ENCODE measurements at regions of chr19 and their contacts with region 1.

Region 1: DNA sequence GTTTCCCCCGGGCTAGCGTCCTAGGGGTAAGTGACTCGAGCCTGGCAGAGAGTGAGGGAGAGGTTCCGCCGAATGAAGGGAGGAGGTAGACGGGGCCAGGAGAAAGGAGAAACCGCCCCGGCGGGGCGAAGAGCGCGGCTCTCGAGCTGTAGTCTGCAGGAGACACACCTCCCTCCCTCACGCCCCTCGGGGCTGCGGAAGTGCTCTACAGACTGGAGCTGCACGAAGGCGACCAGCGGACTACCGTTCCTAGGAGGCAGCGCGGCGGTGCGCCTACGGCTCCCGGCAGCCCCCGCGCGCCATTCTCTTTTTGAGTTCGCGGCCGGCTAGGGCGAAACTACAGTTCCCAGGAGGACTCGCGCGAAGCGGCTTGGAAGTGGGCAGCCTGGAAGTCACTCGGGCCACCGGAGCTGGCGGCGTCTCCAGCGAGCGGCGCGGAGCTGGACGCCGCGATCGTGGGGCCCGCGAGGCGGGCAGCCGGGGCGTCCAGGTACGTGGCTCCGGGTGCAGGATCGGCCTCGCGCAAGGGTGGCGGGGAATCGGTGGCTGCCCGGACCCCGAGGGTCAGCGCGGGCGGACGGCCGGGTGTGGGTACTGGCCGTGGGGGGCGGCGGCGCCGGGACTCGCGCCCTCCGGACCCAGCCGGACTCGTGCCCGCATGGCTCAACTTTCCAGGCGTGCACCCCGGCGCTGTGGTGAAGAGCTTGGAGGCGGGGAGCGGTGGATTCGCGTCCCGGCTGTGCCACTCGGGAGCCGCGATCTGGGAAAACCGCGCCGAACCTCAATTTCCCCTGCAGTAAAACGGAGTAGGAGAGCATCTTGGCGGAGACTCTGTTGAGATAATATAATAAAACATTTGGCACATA is at the start of gene SIPA1L3:
- DNase-seq: peak; percentile 84 to 96 (median 92)
- ATAC-seq: peak; percentile 98
- H3K4me3 ChIP-seq: peak within 1 kb of the TSS; percentile 98
- H3K4me3 Mint-ChIP-seq: peak within 1 kb of the TSS; percentile 97
- H3K27ac ChIP-seq: peak within 1 kb of the TSS; percentile 23 to 68
- H3K27ac Mint-ChIP-seq: peak within 1 kb of the TSS; percentile 91
- H3K4me1 ChIP-seq: peaks cover 26% of the 10 kb centered on the region
- H3K4me1 Mint-ChIP-seq: peaks cover 37% of the 10 kb centered on the region
- H3K27me3 ChIP-seq: no peaks in the 10 kb centered on the region
- H3K27me3 Mint-ChIP-seq: no peaks in the 10 kb centered on the region
- CTCF ChIP-seq: no peak
- total RNA-seq, gene SIPA1L3: 15.5 to 17.7 TPM

Region 2: GRCh38 chr19:36687214-36688056 is 1219.7 kb before region 1 on chr19 and contains the start of gene ZNF567:
- CTCF ChIA-PET with region 1: no interaction called
- POLR2A ChIA-PET with region 1: no interaction called
- intact Hi-C with region 1: loop called in 1 of 2 experiments (anchors 2 kb)
- DNase-seq: peak; percentile 94 to 99 (median 97)
- ATAC-seq: peak; percentile 93
- H3K4me3 ChIP-seq: peak within 1 kb of the TSS; percentile 67
- H3K4me3 Mint-ChIP-seq: peak within 1 kb of the TSS; percentile 99
- H3K27ac ChIP-seq: peak within 1 kb of the TSS; percentile 47 to 56
- H3K27ac Mint-ChIP-seq: peak within 1 kb of the TSS; percentile 97
- H3K4me1 ChIP-seq: peaks cover 23% of the 10 kb centered on the region
- H3K4me1 Mint-ChIP-seq: peaks cover 40% of the 10 kb centered on the region
- H3K27me3 ChIP-seq: no peaks in the 10 kb centered on the region
- H3K27me3 Mint-ChIP-seq: no peaks in the 10 kb centered on the region
- CTCF ChIP-seq: no peak
- total RNA-seq, gene ZNF567: 7.3 to 7.6 TPM

Region 3: DNA sequence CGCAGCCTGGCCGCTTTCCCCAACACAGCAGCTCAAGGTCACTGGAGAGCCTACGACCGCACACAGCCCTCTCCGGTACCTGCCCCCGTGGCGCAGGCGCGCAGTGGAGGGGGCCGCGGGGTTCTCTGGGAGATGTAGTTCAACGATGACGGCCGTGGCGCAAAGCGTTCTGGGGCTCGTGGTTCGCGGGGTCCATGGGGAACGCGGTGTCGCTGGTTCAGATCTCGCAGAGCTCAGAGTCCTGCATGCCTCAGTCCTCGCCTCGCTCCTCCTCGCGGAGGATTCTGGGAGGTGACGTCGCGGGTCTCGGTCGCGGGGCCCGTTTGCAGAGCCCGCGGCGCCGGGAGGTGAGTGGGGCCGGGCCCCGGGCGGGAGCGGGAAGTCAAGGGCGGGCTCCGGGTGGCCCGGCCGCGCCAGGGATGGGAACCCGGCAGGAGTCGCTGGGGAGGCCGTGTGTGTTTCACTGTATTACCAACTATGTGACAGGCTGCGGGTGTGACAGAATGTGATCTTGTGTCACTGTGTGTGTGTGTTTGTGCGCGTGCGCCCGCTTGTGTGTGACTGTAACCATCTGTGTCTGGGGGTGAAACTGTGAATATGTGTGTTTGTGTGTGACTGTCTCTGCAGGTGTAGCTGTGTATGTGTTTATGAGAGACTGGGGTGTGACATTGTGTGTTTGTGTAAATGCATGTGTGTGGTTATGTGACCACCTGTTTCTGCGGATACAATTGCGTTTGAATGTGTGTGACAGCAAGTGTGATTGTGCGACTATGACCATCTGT is 536.0 kb before region 1 on chr19 and contains the start of gene ZNF527:
- CTCF ChIA-PET with region 1: interaction called, 6 read pairs
- POLR2A ChIA-PET with region 1: interaction called, 9 read pairs
- intact Hi-C with region 1: loop called in 1 of 2 experiments (anchors 5 kb)
- DNase-seq: peak; percentile 93 to 98 (median 96)
- ATAC-seq: peak; percentile 96
- H3K4me3 ChIP-seq: peak within 1 kb of the TSS; percentile 59
- H3K4me3 Mint-ChIP-seq: peak within 1 kb of the TSS; percentile 96
- H3K27ac ChIP-seq: peak within 1 kb of the TSS; percentile 76 to 85
- H3K27ac Mint-ChIP-seq: peak within 1 kb of the TSS; percentile 96
- H3K4me1 ChIP-seq: peaks cover 17% of the 10 kb centered on the region
- H3K4me1 Mint-ChIP-seq: peaks cover 16% of the 10 kb centered on the region
- H3K27me3 ChIP-seq: no peaks in the 10 kb centered on the region
- H3K27me3 Mint-ChIP-seq: no peaks in the 10 kb centered on the region
- CTCF ChIP-seq: no peak
- total RNA-seq, gene ZNF527: 7.8 to 8.4 TPM

Region 4: GRCh38 chr19:38049105-38049649 is 142.1 kb after region 1 on chr19:
- CTCF ChIA-PET with region 1: interaction called, 18 read pairs
- POLR2A ChIA-PET with region 1: interaction called, 35 read pairs
- intact Hi-C with region 1: loop called (anchors 2 kb)
- DNase-seq: peak; percentile 27 to 90 (median 44)
- ATAC-seq: peak; percentile 88
- H3K4me3 ChIP-seq: peak overlapping the region; percentile 49
- H3K4me3 Mint-ChIP-seq: peak overlapping the region; percentile 65
- H3K27ac ChIP-seq: peak overlapping the region; percentile 78 to 83
- H3K27ac Mint-ChIP-seq: peak overlapping the region; percentile 98
- H3K4me1 ChIP-seq: peaks cover 42% of the 10 kb centered on the region
- H3K4me1 Mint-ChIP-seq: peaks cover 39% of the 10 kb centered on the region
- H3K27me3 ChIP-seq: no peaks in the 10 kb centered on the region
- H3K27me3 Mint-ChIP-seq: no peaks in the 10 kb centered on the region
- CTCF ChIP-seq: no peak

Region 5: GRCh38 chr19:38229585-38230073 is 322.5 kb after region 1 on chr19:
- CTCF ChIA-PET with region 1: interaction called, 7 read pairs
- POLR2A ChIA-PET with region 1: no interaction called
- intact Hi-C with region 1: loop called in 1 of 2 experiments (anchors 5 kb)
- DNase-seq: peak; percentile 25 to 85 (median 50)
- ATAC-seq: peak; percentile 91
- H3K4me3 ChIP-seq: no peak overlapping the region
- H3K4me3 Mint-ChIP-seq: peak overlapping the region; percentile 13
- H3K27ac ChIP-seq: no peak overlapping the region
- H3K27ac Mint-ChIP-seq: no peak overlapping the region
- H3K4me1 ChIP-seq: peaks cover 24% of the 10 kb centered on the region
- H3K4me1 Mint-ChIP-seq: peaks cover 12% of the 10 kb centered on the region
- H3K27me3 ChIP-seq: peaks cover 53 to 59% of the 10 kb centered on the region in 2 experiments
- H3K27me3 Mint-ChIP-seq: peaks cover 79% of the 10 kb centered on the region
- CTCF ChIP-seq: no peak

Region 6: DNA sequence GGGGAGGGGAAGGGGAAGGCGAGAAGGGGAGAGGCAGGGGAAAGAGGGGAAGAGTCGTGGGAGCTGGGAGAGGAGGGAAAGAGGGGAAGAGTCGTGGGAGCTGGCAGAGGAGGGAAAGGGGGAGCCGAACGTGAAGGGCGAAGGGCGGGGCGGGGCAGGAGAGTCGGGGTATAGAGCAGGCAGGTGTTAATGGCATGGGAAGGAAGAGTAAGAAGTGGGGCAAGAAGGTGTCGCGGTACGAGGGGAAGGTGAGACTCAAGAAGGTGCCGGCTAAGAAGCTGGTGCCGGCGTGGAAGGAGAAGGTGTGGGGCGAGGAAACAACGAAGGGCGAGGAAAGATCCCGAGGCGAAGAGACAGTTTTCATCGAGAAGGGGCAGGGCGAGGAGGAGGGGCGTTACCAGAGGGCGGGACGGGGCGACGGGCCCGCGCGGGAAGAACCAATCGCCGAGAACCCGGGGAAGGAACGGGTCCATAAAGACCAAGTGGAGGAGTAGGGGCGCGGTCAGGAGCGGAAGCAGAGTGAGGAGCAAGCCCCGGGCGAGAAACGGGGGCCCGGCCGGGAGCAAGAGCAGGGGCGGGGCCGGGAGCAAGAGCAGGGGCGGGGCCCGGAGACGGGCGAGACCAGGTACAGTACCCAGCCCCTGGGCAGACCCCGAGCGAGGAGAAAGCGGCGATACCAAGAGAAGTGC is 429.0 kb after region 1 on chr19:
- CTCF ChIA-PET with region 1: interaction called, 8 read pairs
- POLR2A ChIA-PET with region 1: interaction called, 9 read pairs
- intact Hi-C with region 1: loop called (anchors 1 kb)
- DNase-seq: peak; percentile 85 to 97 (median 92)
- ATAC-seq: peak; percentile 63
- H3K4me3 ChIP-seq: peak overlapping the region; percentile 95
- H3K4me3 Mint-ChIP-seq: peak overlapping the region; percentile 93
- H3K27ac ChIP-seq: peak overlapping the region; percentile 84 to 97
- H3K27ac Mint-ChIP-seq: peak overlapping the region; percentile 96
- H3K4me1 ChIP-seq: peaks cover 27% of the 10 kb centered on the region
- H3K4me1 Mint-ChIP-seq: peaks cover 24% of the 10 kb centered on the region
- H3K27me3 ChIP-seq: no peaks in the 10 kb centered on the region
- H3K27me3 Mint-ChIP-seq: no peaks in the 10 kb centered on the region
- CTCF ChIP-seq: no peak

Region 7: DNA sequence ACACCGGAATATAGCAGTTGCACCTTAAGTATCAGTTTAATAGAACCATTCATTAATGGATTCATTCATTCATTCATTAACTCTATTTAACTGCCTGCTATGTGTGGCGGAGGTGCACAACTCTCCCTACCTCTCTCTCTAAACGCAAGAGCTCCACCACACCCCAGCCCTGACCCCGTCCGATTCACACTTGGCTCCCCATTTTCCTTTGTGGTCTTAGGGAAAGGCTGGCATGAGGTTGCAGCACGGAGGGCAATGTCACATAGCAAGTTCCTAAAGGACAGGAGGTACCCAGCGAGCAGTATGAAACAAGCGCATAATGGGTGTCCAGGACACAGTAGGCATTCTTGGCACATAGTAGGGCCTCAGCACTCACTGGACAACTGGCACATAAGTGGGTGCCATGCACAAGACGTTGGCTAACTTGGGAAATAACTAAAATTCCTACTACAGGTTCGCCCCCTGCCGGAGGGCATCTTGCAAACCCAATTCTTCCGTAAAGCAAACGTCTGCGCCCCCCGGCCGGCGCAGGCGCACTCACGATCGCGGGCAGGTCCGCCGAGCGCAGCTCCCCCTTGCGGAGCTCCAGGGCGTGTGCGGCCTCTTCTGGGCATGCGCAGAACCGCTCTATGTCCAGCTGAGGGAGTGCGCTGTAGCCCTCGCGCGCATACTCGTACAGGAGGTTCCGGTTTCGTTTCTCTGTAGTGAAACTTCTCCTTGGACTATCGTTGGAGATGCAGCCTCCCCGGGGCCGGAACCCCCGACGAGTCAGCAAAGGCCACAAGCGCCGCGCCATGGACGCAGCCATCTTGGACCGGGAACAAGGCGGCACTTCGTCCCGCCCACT is 1023.0 kb after region 1 on chr19 and contains the start of gene SARS2:
- CTCF ChIA-PET with region 1: no interaction called
- POLR2A ChIA-PET with region 1: interaction called, 4 read pairs
- intact Hi-C with region 1: loop called in 1 of 2 experiments (anchors 10 kb)
- DNase-seq: peak; percentile 87 to 97 (median 92)
- ATAC-seq: peak; percentile 68
- H3K4me3 ChIP-seq: peak within 1 kb of the TSS; percentile 79
- H3K4me3 Mint-ChIP-seq: peak within 1 kb of the TSS; percentile 99
- H3K27ac ChIP-seq: peak within 1 kb of the TSS; percentile 86 to 87
- H3K27ac Mint-ChIP-seq: peak within 1 kb of the TSS; percentile 100
- H3K4me1 ChIP-seq: peaks cover 46% of the 10 kb centered on the region
- H3K4me1 Mint-ChIP-seq: peaks cover 39% of the 10 kb centered on the region
- H3K27me3 ChIP-seq: no peaks in the 10 kb centered on the region
- H3K27me3 Mint-ChIP-seq: no peaks in the 10 kb centered on the region
- CTCF ChIP-seq: peak; percentile 100
- total RNA-seq, gene SARS2: 18.7 to 22.8 TPM